ENCODE measurements at regions of chr20 and their contacts with region 1.

Region 1: GRCh38 chr20:51306503-51307358 is 235.8 kb downstream of the NFATC2 start:
- DNase-seq: peak; percentile 92
- ATAC-seq: peak; percentile 100
- H3K4me3 ChIP-seq: peak overlapping the region; percentile 2; the same call in 1 of the 2 replicates
- H3K27ac ChIP-seq: no peak overlapping the region
- H3K4me1 ChIP-seq: peaks cover 19% of the 10 kb centered on the region
- H3K27me3 ChIP-seq: no peaks in the 10 kb centered on the region
- CTCF ChIP-seq: peak; percentile 100

Region 2: DNA sequence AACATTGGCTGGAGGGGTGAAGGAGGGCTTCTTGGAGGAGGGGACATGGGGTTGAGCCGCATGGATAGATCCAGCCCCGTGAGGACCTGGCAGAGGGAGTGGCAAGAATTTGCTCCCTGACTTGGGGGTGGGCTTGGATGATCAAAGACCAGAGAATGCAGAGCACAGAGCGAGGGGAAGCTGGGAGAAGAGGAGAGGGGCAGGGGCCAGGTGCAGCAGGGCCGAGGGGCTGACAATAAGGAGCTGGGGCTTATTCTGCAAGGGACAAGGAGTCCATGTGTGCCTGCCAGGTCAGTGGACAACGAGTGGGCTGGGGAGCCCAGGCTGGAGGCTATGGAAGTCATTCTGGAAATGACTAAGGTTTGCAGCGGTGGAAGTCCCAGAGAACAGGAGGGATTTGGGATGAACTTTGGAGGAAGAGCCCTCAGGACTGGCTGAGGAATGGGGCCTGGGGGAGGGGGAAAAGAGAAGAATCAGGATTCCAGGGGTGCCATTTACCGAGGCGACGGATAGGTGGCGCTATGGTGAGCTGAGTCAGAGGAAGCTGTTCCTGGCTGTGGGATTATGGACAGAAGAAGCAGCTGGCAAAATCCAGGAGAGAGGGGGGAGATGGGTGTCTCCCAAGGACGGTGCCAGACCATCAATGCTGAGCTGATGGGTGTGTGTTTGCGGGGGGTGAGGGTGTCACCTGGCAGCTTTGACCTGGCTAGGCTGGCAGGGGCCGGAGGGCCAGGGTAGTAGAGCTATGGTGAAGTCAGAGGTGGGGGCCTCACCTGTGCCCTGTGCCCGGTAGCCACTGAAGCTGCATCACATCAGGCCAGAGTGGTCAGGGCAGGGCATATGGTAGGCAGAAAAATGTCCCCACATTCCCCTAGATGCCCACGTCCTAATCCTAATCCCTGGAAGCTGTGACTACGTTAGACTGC is 291.7 kb before region 1 on chr20:
- CTCF ChIA-PET with region 1: interaction called, 5 read pairs
- POLR2A ChIA-PET with region 1: no interaction called
- intact Hi-C with region 1: loop called (anchors 1 kb)
- DNase-seq: peak; percentile 90
- ATAC-seq: peak; percentile 85
- H3K4me3 ChIP-seq: no peak overlapping the region
- H3K27ac ChIP-seq: no peak overlapping the region
- H3K4me1 ChIP-seq: no peaks in the 10 kb centered on the region
- H3K27me3 ChIP-seq: no peaks in the 10 kb centered on the region
- CTCF ChIP-seq: peak; percentile 98

Region 3: GRCh38 chr20:51220293-51220706 is 86.4 kb before region 1 on chr20:
- CTCF ChIA-PET with region 1: no interaction called
- POLR2A ChIA-PET with region 1: no interaction called
- intact Hi-C with region 1: loop called (anchors 2 kb)
- DNase-seq: peak; percentile 65
- ATAC-seq: peak; percentile 73
- H3K4me3 ChIP-seq: peak overlapping the region; percentile 26; the same call in 1 of the 2 replicates
- H3K27ac ChIP-seq: no peak overlapping the region
- H3K4me1 ChIP-seq: peaks cover 11% of the 10 kb centered on the region
- H3K27me3 ChIP-seq: no peaks in the 10 kb centered on the region
- CTCF ChIP-seq: peak; percentile 99

Region 4: DNA sequence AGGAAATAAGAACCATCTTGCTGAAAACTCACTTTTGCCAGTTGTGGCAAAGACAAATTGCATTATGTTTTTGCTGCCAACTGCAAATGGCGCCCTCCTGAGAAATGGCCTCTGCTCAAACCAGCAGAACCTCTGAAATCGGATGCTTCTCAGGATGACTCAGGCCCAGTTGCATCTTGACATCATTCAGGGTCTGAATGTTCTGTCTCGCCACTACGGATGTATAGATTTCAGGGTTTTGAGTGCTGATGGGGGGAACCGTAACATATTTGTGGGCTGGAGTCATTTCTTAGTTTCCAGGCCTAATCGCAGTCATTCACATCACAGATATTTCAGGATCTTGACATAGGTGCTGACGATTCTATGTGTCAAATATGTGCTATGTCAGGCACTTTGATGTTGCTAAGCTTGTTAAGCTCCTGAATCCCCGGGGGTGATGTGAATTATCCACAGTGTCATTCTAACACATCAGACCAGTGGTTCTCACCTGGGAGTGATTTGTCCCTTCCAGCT is 28.7 kb after region 1 on chr20:
- CTCF ChIA-PET with region 1: no interaction called
- POLR2A ChIA-PET with region 1: no interaction called
- intact Hi-C with region 1: no loop called
- DNase-seq: peak; percentile 98
- ATAC-seq: peak; percentile 89
- H3K4me3 ChIP-seq: no peak overlapping the region
- H3K27ac ChIP-seq: peak overlapping the region; percentile 81
- H3K4me1 ChIP-seq: peaks cover 29% of the 10 kb centered on the region
- H3K27me3 ChIP-seq: no peaks in the 10 kb centered on the region
- CTCF ChIP-seq: peak; percentile 60; the same call in 1 of the 2 replicates

Region 5: DNA sequence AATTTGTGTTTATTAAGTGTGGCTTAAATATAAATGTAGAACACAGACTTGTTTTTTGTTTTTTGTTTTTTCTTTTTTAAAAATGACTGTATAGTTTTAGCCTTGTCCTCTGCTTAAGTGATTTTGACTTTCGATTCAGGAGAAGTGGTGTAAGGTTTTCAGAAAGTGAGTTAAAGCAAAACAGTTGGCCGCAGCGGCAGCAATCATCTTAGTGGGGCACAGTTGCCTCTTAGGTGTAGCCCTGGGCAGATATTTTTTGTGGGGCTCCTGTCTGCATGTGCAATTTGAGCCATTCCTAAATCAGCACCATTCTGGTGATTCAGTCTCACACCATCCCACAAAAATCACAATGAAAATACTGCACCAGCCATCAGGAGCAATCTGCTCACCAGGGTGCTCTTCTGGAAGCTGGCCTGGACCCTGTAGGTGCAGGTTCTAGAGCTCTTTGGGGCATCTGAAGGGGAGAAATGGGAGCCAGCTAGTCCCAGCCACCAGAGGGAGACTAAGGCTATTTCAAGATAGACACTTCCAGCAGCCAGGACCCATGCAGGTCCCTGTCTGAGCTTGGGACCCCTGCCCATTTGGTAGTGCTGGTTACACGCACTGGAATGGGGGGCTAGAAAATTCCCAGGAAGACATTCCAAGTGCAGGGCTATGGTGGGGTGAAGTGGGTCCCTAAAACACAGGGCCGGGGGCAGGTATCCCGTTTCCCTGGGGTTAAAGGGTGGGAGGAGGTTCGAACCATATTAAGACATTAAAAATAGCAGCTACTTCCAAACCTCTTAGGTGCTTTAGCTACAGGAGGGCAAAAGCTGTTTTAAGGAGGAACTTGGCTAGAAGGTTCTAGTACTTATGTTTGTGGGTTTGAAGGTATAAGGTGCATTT is 79.2 kb after region 1 on chr20:
- CTCF ChIA-PET with region 1: no interaction called
- POLR2A ChIA-PET with region 1: no interaction called
- intact Hi-C with region 1: no loop called
- DNase-seq: peak; percentile 74
- ATAC-seq: no peak
- H3K4me3 ChIP-seq: no peak overlapping the region
- H3K27ac ChIP-seq: no peak overlapping the region; the same call in 1 of the 2 replicates
- H3K4me1 ChIP-seq: peaks cover 64% of the 10 kb centered on the region
- H3K27me3 ChIP-seq: no peaks in the 10 kb centered on the region
- CTCF ChIP-seq: peak; percentile 95

Region 6: GRCh38 chr20:51423290-51423667 is 116.5 kb after region 1 on chr20:
- CTCF ChIA-PET with region 1: no interaction called
- POLR2A ChIA-PET with region 1: no interaction called
- intact Hi-C with region 1: no loop called
- DNase-seq: no peak
- ATAC-seq: no peak
- H3K4me3 ChIP-seq: no peak overlapping the region
- H3K27ac ChIP-seq: no peak overlapping the region
- H3K4me1 ChIP-seq: peaks cover 12% of the 10 kb centered on the region
- H3K27me3 ChIP-seq: no peaks in the 10 kb centered on the region
- CTCF ChIP-seq: no peak

Region 7: DNA sequence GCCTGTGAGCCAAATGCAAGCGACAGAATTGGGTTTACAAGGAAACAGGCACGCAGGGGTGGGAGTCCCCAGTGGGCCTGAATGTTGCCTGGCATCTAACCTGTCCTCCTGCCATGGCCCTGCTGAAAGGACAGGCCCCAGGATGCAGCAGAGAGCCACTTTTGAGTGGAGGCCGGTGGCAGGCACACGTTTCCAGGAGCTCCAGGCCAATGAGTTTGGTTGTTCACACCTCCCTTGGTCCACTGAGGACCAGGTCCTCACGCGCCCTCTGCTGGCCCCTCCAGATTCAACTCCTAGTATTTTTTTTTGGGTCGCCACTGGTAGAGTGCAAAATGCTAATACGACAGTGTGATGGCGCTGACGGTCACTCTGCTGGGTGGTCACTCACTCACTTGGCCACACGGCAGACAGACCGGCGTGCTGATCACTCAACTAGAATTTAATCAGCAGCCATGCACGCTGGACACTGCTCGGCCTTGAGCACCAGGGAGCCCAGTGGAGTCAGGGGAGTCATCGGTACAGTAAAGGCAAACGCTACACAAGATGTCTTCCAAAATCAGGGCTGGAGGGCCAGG is 317.5 kb after region 1 on chr20:
- CTCF ChIA-PET with region 1: interaction called, 12 read pairs
- POLR2A ChIA-PET with region 1: no interaction called
- intact Hi-C with region 1: no loop called
- DNase-seq: peak; percentile 94
- ATAC-seq: peak; percentile 52
- H3K4me3 ChIP-seq: no peak overlapping the region
- H3K27ac ChIP-seq: peak overlapping the region; percentile 27
- H3K4me1 ChIP-seq: peaks cover 20% of the 10 kb centered on the region
- H3K27me3 ChIP-seq: no peaks in the 10 kb centered on the region
- CTCF ChIP-seq: peak; percentile 97

Measured in PC-3 (cell line).